Right cardiac atrium (tissue), 5 donors: ENCODE measurements at regions of chr5 and their contacts with region 1.

Region 1: DNA sequence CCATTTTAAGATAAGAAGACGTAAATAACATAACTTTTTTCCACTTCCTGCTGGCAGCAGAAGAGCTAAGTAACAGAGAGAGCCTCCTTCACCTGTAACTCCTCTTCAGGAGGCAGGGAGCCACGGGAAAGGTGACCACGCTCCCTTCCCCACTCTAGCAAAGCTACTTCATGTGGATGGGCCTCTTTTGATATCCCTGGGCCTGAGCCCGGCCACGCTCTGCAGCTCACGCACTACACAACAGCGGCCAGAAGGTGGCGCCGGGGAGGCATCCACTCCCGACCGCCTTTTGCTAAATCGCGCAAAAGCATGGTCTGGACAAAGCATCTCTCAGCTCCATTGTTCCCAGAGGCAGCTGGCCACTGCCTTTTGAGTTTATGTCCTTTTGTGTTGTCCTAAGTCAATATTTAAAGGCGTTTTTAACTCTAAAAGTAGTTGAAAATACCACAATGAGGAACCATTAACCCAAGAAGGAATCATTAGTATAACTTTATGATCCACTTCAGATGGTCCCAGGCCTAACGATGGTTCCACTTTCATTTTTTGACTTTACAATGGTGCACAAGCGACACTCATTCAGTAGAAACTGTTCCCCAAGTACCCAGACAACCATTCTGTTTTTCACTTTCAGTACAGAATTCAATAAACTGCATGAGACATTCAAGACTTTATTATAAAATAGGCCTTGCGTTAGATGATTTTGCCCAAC is 23.6 kb downstream of the CMBL start:
- DNase-seq: peak; percentile 87 to 93 (median 93)
- ATAC-seq: peak; percentile 92 to 95
- H3K4me3 ChIP-seq: no peak overlapping the region
- H3K27ac ChIP-seq: no peak overlapping the region
- H3K4me1 ChIP-seq: peaks cover 3% of the 10 kb centered on the region
- H3K27me3 ChIP-seq: no peaks in the 10 kb centered on the region

Region 2: DNA sequence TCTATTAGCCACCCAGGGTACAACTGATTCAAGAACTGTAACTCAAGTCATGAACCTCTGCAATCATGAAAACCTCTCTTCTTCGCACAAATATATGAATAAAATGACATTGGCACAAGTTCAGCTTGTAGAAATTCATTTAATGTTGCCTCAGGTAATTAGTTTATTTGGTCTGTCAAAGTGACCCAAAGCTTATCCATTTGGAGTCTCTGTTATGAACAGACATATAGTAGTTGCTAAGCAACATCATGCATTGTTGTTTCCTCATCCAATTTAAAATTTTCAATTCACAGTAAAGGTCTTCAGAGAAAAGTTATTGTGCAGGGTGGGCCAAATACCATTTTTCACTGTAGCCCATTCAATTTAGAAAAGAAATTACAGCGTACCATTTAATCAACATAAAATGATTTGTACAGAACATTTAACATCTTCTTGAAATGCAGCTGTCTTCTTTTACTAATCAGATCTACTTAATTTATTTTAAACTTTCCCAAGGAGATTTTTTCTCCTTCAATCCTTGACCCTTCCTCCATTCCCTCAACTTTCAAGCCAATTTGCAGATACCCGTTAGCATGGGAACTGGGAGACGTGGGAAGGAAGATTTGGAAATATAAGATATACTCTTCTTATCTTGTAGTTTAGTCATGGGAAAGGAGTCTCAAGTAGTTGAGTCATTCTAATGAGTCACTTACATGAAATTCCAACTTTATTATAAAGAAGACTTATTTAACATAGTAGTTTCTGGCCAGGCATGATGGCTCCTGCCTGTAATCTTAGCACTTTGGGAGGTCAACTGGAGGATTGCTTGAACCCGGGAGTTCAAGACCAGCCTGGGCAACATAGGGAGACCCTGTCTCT is 265.6 kb before region 1 on chr5:
- intact Hi-C with region 1: no loop called
- DNase-seq: no peak
- ATAC-seq: peak in 1 of 2 donors; percentile 50
- H3K4me3 ChIP-seq: no peak overlapping the region
- H3K27ac ChIP-seq: no peak overlapping the region
- H3K4me1 ChIP-seq: no peaks in the 10 kb centered on the region
- H3K27me3 ChIP-seq: no peaks in the 10 kb centered on the region

Region 3: GRCh38 chr5:10393491-10393890 is 109.4 kb after region 1 on chr5:
- intact Hi-C with region 1: loop called in 1 of 4 experiments (anchors 10 kb)
- DNase-seq: no peak
- ATAC-seq: no peak
- H3K4me3 ChIP-seq: no peak overlapping the region
- H3K27ac ChIP-seq: peak overlapping the region; percentile 56
- H3K4me1 ChIP-seq: no peaks in the 10 kb centered on the region
- H3K27me3 ChIP-seq: no peaks in the 10 kb centered on the region

Region 4: DNA sequence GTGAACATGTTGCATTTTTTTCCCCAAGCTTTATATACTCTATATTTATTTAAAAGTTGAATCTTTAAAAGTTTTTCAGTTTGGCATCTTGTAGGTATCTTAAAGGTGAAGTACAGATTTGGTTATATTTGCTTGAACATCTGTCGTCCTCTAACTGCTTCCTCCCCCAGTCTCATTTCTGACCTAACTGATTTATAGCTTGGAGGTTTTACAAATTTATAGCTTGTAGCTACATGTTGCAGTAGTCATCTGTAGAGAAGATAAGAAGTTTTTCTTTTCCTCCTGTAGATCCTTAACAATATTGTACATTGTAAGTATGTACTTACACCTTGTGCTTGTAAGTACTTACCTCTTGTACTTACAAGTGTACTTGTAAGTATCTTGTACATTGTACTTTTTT is 126.6 kb after region 1 on chr5:
- intact Hi-C with region 1: loop called in 1 of 4 experiments (anchors 5 kb)
- DNase-seq: no peak
- ATAC-seq: no peak
- H3K4me3 ChIP-seq: no peak overlapping the region
- H3K27ac ChIP-seq: no peak overlapping the region
- H3K4me1 ChIP-seq: no peaks in the 10 kb centered on the region
- H3K27me3 ChIP-seq: no peaks in the 10 kb centered on the region

Region 5: DNA sequence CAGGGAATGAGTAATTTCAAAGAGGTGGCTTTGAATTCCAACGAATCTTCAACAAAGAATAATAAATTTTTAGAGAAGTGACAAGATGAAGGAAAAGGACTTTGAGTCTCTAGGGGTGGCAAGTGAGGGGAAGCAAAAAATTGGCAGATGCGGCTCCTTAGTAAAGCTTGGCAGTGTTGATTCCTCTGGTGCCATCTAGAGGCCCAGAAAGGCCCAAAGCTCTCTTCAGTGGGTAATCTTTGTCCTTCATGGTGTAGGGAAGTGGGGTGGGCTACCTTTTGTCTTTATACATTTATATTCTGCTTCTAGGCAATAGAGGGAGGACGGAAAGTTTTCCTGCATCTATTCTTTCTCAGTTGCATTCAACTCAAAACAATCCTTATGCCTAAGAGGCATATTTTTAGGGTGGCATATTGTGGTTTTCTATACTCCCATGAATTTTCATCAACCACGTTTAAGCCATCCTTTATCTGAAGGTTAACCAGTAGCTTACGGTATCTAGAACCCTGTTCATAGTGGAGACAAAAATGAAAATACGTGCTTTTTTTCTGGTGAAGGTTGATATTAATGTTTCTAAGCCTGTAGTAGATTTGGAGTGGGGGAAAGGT is 140.1 kb after region 1 on chr5:
- intact Hi-C with region 1: loop called in 3 of 4 experiments (anchors 5 to 10 kb)
- DNase-seq: no peak
- ATAC-seq: peak; percentile 53 to 65
- H3K4me3 ChIP-seq: no peak overlapping the region
- H3K27ac ChIP-seq: no peak overlapping the region
- H3K4me1 ChIP-seq: peaks cover 10% of the 10 kb centered on the region
- H3K27me3 ChIP-seq: no peaks in the 10 kb centered on the region